Dorsolateral prefrontal cortex (tissue), 120 donors: ENCODE measurements at regions of chr2 and their contacts with region 1.

Region 1: DNA sequence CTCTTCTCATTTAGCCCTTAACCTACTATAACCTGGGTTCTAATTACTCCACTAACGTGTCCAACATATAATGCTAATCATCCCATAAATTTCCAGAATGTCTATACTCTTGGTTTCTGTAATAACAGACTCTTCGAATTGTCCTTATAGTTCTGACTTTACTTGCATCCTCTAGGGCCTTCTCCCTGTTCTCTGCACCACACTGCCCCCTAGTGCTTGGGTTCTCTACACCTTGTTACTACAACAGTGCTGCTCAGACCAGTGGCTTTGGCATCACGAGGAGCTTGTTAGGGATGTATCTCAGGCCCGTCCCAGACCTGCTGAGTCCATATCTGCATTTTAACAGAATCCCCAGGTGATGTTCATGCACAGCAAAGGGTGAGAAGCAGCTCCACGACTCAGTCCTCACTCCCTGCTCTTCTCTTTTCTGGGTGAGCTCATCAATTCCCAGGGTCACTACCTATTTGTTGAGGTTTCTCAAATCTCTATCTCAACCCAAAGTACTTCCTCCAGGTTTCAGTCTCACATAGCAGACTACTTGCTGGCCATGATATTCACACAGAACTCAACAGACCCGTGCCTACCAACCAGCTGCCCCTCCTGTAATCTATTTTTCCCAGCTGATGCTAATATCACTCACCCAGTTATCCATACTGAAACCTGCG is 14.5 kb upstream of the DDX1 start:
- DNase-seq: peak; percentile 61 to 93 (median 86)
- H3K4me3 ChIP-seq: no peak overlapping the region
- H3K27ac ChIP-seq: no peak overlapping the region
- H3K27me3 ChIP-seq: peaks cover 0 to 3% (median 0%) of the 10 kb centered on the region in 45 donors
- CTCF ChIP-seq: peak; percentile 46 to 87 (median 78)

Region 2: GRCh38 chr2:14428056-14428455 is 1149.1 kb before region 1 on chr2:
- intact Hi-C with region 1: loop called in 1 of 2 experiments (anchors 5 kb)
- DNase-seq: peak in 1 of 10 donors; percentile 25
- H3K4me3 ChIP-seq: no peak overlapping the region
- H3K27ac ChIP-seq: no peak overlapping the region
- H3K27me3 ChIP-seq: no peaks in the 10 kb centered on the region
- CTCF ChIP-seq: peak in 47 of 56 donors; percentile 9 to 61 (median 36)